Heart left ventricle (tissue), 16 donors: ENCODE measurements at regions of chr2 and their contacts with region 1.

Region 1: GRCh38 chr2:79041032-79041448 is 15.5 kb downstream of the REG3G start:
- DNase-seq: no peak
- ATAC-seq: peak in 1 of 4 donors; percentile 36
- H3K4me3 ChIP-seq: no peak overlapping the region
- H3K27ac ChIP-seq: no peak overlapping the region
- H3K4me1 ChIP-seq: no peaks in the 10 kb centered on the region
- H3K27me3 ChIP-seq: no peaks in the 10 kb centered on the region
- CTCF ChIP-seq: peak in 8 of 12 donors; percentile 16 to 51 (median 35)
- POLR2A ChIP-seq: no peak

Region 2: GRCh38 chr2:79219383-79219988 is 178.4 kb after region 1 on chr2:
- intact Hi-C with region 1: loop called in 3 of 10 experiments (anchors 5 to 10 kb)
- DNase-seq: no peak
- ATAC-seq: no peak
- H3K4me3 ChIP-seq: no peak overlapping the region
- H3K27ac ChIP-seq: no peak overlapping the region
- H3K4me1 ChIP-seq: no peaks in the 10 kb centered on the region
- H3K27me3 ChIP-seq: peaks cover 0 to 5% (median 0%) of the 10 kb centered on the region in 9 donors
- CTCF ChIP-seq: peak; percentile 42 to 77 (median 63)
- POLR2A ChIP-seq: no peak

Region 3: GRCh38 chr2:79235135-79235534 is 194.1 kb after region 1 on chr2:
- intact Hi-C with region 1: no loop called
- DNase-seq: no peak
- ATAC-seq: no peak
- H3K4me3 ChIP-seq: no peak overlapping the region
- H3K27ac ChIP-seq: no peak overlapping the region
- H3K4me1 ChIP-seq: no peaks in the 10 kb centered on the region
- H3K27me3 ChIP-seq: no peaks in the 10 kb centered on the region
- CTCF ChIP-seq: no peak
- POLR2A ChIP-seq: no peak

Region 4: DNA sequence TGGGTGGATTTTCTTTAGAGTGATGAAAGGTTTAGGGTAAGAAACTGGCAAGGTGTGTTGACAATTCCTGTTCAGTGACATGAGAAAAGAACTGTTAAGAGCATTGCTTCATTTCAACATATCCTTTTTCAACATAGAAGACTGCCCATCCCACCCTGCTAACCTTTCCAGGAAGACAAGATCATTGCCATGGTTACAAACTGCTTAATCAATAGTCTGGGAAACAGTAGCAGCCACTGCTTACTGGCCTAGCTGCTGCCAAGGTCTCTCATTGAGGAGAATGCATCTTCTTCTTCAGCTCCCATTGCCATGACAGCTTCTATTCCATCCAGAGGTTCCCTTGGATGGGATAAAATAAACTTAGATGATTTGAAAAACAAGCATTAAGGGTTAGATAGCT is 1051.4 kb after region 1 on chr2:
- intact Hi-C with region 1: loop called in 1 of 10 experiments (anchors 10 kb)
- DNase-seq: no peak
- ATAC-seq: no peak
- H3K4me3 ChIP-seq: no peak overlapping the region
- H3K27ac ChIP-seq: no peak overlapping the region
- H3K4me1 ChIP-seq: no peaks in the 10 kb centered on the region
- H3K27me3 ChIP-seq: no peaks in the 10 kb centered on the region
- CTCF ChIP-seq: no peak
- POLR2A ChIP-seq: no peak